ENCODE measurements at regions of chr10 and their contacts with region 1.

Region 1: DNA sequence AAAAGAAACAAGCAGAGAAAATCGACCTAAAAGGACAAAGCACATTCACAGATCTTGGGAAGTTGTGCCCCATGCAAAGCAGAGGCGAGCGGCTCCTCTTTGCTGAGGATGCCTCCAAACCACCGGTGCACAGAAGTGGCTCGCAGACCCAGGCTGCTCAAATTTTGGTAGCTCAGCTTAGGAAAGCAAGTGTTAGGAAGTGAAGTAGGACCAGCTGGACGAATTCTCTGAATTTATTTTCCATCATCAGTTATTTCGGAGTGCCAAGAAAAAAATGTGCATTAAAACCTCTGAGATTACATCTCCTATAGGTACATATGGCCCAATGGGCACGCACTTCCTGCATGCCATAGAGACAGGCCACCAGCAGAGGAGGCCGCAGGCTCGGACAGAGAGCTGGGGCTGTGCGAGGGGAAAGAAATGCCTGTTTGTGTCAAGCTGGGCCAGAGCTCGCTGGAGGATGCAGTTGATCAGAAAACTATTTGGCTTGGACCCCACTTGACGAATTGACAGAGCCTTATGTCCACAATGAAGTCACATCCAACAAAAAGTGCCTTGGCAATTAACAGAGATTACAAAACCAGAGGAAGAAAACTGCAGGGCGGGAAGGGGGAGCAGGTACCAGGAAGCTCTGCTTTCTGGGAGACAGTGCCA is 122.3 kb upstream of the LYZL2 start:
- DNase-seq: peak; percentile 50 to 74
- ATAC-seq: peak; percentile 62 to 84
- H3K4me3 ChIP-seq: no peak overlapping the region
- H3K27ac ChIP-seq: peak overlapping the region; percentile 30 to 50 (median 44)
- H3K4me1 ChIP-seq: no peaks in the 10 kb centered on the region
- H3K27me3 ChIP-seq: peaks cover 0 to 3% (median 0%) of the 10 kb centered on the region in 3 donors
- CTCF ChIP-seq: peak; percentile 32 to 89 (median 44)
- POLR2A ChIP-seq: no peak

Region 2: DNA sequence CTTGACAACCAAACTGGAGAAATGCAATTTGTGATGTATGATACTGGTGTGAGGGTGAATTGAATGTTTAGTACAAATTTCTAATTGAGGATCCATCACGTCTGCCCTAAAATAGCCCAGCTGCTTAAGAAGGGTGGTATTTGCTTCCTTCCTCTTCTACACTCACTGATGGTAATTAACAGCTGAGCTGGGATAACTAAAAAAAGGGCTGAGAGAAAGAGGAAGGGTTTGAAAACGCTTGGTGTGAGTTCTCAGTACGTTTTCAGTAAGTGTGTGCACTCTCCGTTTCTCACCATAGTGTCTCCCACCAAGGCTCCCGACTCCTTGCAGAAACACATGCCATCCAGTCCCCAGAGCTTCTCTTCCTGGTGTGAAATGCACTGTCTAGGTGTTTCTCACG is 263.5 kb before region 1 on chr10:
- in situ Hi-C with region 1: no loop called
- intact Hi-C with region 1: no loop called
- DNase-seq: no peak
- ATAC-seq: no peak
- H3K4me3 ChIP-seq: no peak overlapping the region
- H3K27ac ChIP-seq: no peak overlapping the region
- H3K4me1 ChIP-seq: peaks cover 0 to 5% of the 10 kb centered on the region in 2 donors
- H3K27me3 ChIP-seq: no peaks in the 10 kb centered on the region
- CTCF ChIP-seq: no peak
- POLR2A ChIP-seq: no peak

Region 3: DNA sequence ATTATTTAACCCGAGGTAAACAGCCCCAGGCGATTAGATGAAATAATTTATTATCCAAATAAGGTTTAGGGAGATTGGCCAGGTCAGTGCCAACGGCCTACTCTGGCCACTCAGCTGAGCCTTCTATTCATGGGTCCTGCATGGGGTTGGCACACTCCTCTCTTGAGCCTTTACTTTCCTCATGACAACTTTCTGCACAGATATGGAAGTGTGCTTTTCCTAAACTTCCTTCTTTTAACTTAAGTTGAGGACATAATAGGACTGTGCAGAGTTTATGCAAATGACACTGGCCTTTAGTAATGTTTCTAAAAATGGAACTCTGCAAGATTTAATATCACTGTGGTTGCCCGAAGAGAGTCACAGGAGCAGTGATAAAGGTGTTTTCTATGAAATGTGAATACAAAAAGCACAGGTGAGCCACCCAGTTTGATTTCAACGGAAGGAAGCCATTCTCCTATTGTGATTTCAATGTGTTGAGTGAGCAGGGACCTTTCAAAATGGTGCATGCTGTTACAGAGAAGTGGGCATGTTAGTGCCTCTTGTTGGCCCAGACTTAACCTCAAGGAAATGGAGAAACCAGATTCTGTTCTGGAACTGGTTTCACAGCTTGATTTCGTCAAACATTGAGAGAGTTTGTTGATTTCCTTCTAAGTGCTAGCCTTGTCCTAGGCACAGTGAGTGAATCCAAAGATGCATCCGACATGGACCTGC is 177.9 kb before region 1 on chr10:
- in situ Hi-C with region 1: no loop called
- intact Hi-C with region 1: no loop called
- DNase-seq: no peak
- ATAC-seq: no peak
- H3K4me3 ChIP-seq: no peak overlapping the region
- H3K27ac ChIP-seq: no peak overlapping the region
- H3K4me1 ChIP-seq: peaks cover 0 to 8% of the 10 kb centered on the region in 2 donors
- H3K27me3 ChIP-seq: no peaks in the 10 kb centered on the region
- CTCF ChIP-seq: no peak
- POLR2A ChIP-seq: no peak

Region 4: DNA sequence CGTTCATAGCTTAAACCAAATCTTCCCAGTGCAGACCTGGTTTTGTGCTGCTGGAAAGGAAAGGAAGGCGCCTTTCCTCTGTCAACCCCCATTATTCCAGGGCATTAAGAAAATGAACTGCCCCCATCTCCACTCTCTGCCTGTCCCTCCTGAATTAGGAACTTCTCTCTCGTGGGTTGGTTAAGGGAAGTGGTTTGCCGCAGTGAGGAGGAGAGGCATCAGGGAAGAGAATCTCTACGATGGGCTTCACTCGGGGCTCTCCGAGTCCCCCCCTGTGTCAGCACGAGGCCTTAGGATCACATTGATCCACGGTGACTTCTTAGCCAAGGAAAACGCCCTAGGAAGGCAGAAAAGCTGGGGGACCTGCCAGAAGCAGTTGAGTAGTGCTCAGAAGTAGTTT is 68.3 kb before region 1 on chr10:
- in situ Hi-C with region 1: no loop called
- intact Hi-C with region 1: no loop called
- DNase-seq: no peak
- ATAC-seq: no peak
- H3K4me3 ChIP-seq: no peak overlapping the region
- H3K27ac ChIP-seq: no peak overlapping the region
- H3K4me1 ChIP-seq: no peaks in the 10 kb centered on the region
- H3K27me3 ChIP-seq: peaks cover 0 to 2% (median 0%) of the 10 kb centered on the region in 3 donors
- CTCF ChIP-seq: no peak
- POLR2A ChIP-seq: no peak

Region 5: GRCh38 chr10:31819391-31819820 is 1067.6 kb after region 1 on chr10:
- in situ Hi-C with region 1: loop called in 1 of 4 experiments (anchors 10 kb)
- intact Hi-C with region 1: no loop called
- DNase-seq: peak; percentile 6 to 62
- ATAC-seq: peak; percentile 42 to 51
- H3K4me3 ChIP-seq: no peak overlapping the region
- H3K27ac ChIP-seq: peak overlapping the region in 3 of 4 donors; percentile 12 to 39 (median 19)
- H3K4me1 ChIP-seq: peaks cover 19 to 24% of the 10 kb centered on the region in 2 donors
- H3K27me3 ChIP-seq: no peaks in the 10 kb centered on the region
- CTCF ChIP-seq: no peak
- POLR2A ChIP-seq: no peak

Measured in gastrocnemius medialis (tissue), 4 donors.